ENCODE measurements at regions of chr6 and their contacts with region 1.

Region 1: DNA sequence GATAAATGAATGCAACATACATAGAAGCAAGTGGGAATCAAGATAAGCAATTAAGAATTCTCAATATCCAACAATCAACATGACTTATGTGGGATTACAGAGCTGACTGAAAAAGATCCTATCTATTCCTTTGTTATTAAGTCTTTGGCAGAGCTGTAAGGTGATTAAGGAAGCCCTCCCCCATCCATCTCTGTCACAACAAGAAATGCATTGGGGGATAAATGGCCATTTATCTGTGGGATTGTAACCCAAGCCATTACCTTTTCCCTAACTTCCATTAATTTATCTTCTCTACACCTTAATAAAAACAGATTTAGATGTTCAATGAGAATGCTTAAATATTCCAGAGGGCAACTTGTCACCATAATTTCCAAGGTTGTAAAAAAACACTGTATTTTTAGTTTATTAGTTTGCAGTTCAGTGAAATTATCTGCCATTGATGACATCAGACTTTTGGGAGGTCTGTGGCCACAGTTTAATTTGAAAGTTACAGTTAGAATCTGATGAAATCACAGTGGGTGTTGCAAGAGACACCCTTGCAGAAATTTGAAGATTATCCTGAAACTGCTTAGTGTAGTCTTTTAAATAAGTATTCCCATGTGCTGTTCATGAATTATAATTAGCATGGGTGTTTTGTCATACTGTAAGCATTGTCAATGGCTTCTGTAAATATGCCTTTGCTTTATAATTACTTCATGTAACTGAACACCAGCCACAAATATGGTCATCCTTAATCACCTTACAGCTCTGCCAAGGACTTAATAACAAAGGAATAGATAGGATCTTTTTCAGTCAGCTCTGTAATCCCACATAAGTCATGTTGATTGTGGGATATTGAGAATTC is 49.4 kb upstream of the FYN start:
- DNase-seq: no peak
- H3K4me3 Mint-ChIP-seq: no peak overlapping the region
- H3K27ac Mint-ChIP-seq: no peak overlapping the region
- H3K4me1 Mint-ChIP-seq: peaks cover 33% of the 10 kb centered on the region
- H3K27me3 Mint-ChIP-seq: no peaks in the 10 kb centered on the region

Region 2: GRCh38 chr6:111997078-111997852 is 74.6 kb after region 1 on chr6:
- CTCF ChIA-PET with region 1: interaction called, 5 read pairs
- intact Hi-C with region 1: loop called (anchors 2 kb)
- DNase-seq: peak; percentile 89
- H3K4me3 Mint-ChIP-seq: peak overlapping the region; percentile 53
- H3K27ac Mint-ChIP-seq: peak overlapping the region; percentile 65
- H3K4me1 Mint-ChIP-seq: peaks cover 47% of the 10 kb centered on the region
- H3K27me3 Mint-ChIP-seq: no peaks in the 10 kb centered on the region